OCI-LY7 (cell line): ENCODE measurements at regions of chr1 and their contacts with region 1.

Region 1: GRCh38 chr1:26889551-26890466 is at the start of gene GPN2:
- DNase-seq: peak; percentile 87
- H3K4me3 ChIP-seq: peak within 1 kb of the TSS; percentile 93
- H3K27ac ChIP-seq: peak within 1 kb of the TSS; percentile 62
- H3K4me1 ChIP-seq: peaks cover 14% of the 10 kb centered on the region
- CTCF ChIP-seq: no peak
- total RNA-seq, gene GPN2: 17.5 and 18.1 TPM in 2 replicates

Region 2: DNA sequence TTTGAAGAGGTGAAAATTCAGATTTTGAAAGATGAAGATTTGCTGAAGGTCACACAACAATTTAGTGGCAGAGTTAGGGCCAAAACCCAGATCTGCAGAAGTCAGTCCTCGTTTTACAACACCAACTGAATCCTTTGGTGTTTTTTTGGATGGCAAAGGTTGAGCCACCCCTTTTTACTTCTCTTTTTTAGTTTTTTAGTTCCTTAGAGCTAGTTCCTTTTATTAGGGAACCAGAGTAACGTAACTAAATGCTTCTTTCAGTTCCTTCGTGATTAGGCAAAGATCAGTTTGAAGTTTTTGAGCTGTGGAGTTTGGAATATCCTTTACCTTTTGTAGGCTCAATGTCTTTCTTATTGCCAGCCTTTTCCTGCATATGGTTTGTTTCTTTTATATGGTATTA is 261.9 kb before region 1 on chr1:
- CTCF ChIA-PET with region 1: interaction called, 10 read pairs
- POLR2A ChIA-PET with region 1: no interaction called
- intact Hi-C with region 1: no loop called
- DNase-seq: peak; percentile 33
- H3K4me3 ChIP-seq: no peak overlapping the region
- H3K27ac ChIP-seq: peak overlapping the region; percentile 39
- H3K4me1 ChIP-seq: peaks cover 11% of the 10 kb centered on the region
- CTCF ChIP-seq: no peak

Region 3: GRCh38 chr1:26900001-26900814 is 10.4 kb after region 1 on chr1 and contains the start of gene GPATCH3:
- CTCF ChIA-PET with region 1: interaction called, 4 read pairs
- POLR2A ChIA-PET with region 1: interaction called, 22 read pairs
- intact Hi-C with region 1: no loop called
- DNase-seq: peak; percentile 95
- H3K4me3 ChIP-seq: peak within 1 kb of the TSS; percentile 91
- H3K27ac ChIP-seq: peak within 1 kb of the TSS; percentile 43
- H3K4me1 ChIP-seq: peaks cover 16% of the 10 kb centered on the region
- CTCF ChIP-seq: no peak
- total RNA-seq, gene GPATCH3: 9.2 and 13.8 TPM in 2 replicates

Region 4: GRCh38 chr1:26921540-26922430 is 32.0 kb after region 1 on chr1 and contains the start of gene NUDC:
- CTCF ChIA-PET with region 1: no interaction called
- POLR2A ChIA-PET with region 1: no interaction called
- intact Hi-C with region 1: loop called (anchors 1 kb)
- DNase-seq: peak; percentile 97
- H3K4me3 ChIP-seq: peak within 1 kb of the TSS; percentile 84
- H3K27ac ChIP-seq: peak within 1 kb of the TSS; percentile 33
- H3K4me1 ChIP-seq: peaks cover 16% of the 10 kb centered on the region
- CTCF ChIP-seq: no peak
- total RNA-seq, gene NUDC: 65.7 and 89.3 TPM in 2 replicates